ENCODE measurements at regions of chr9 and their contacts with region 1.

Region 1: GRCh38 chr9:69672596-69673310 is 582 bp upstream of the APBA1 start:
- DNase-seq: peak; percentile 85
- H3K4me3 ChIP-seq: peak overlapping the region; percentile 63 to 76 (median 70)
- H3K27ac ChIP-seq: peak overlapping the region; percentile 81 to 90 (median 87)
- H3K4me1 ChIP-seq: peaks cover 2 to 14% (median 10%) of the 10 kb centered on the region in 4 donors
- H3K27me3 ChIP-seq: no peaks in the 10 kb centered on the region
- CTCF ChIP-seq: peak; percentile 81 to 94 (median 89)
- EP300 ChIP-seq: no peak
- POLR2A ChIP-seq: no peak

Region 2: GRCh38 chr9:69785757-69786156 is 113.0 kb after region 1 on chr9:
- in situ Hi-C with region 1: loop called in 1 of 4 experiments (anchors 25 kb)
- intact Hi-C with region 1: no loop called
- DNase-seq: no peak
- H3K4me3 ChIP-seq: no peak overlapping the region
- H3K27ac ChIP-seq: no peak overlapping the region
- H3K4me1 ChIP-seq: no peaks in the 10 kb centered on the region
- H3K27me3 ChIP-seq: peaks cover 3% of the 10 kb centered on the region
- CTCF ChIP-seq: no peak
- EP300 ChIP-seq: no peak
- POLR2A ChIP-seq: no peak

Region 3: GRCh38 chr9:69877854-69878514 is 205.2 kb after region 1 on chr9:
- in situ Hi-C with region 1: loop called in 3 of 4 experiments (anchors 10 to 25 kb)
- intact Hi-C with region 1: no loop called
- DNase-seq: no peak
- H3K4me3 ChIP-seq: no peak overlapping the region
- H3K27ac ChIP-seq: no peak overlapping the region
- H3K4me1 ChIP-seq: no peaks in the 10 kb centered on the region
- H3K27me3 ChIP-seq: no peaks in the 10 kb centered on the region
- CTCF ChIP-seq: peak; percentile 53 to 67 (median 54)
- EP300 ChIP-seq: no peak
- POLR2A ChIP-seq: no peak

Measured in transverse colon (tissue), 4 donors.